Panc1 (cell line): ENCODE measurements at regions of chr11 and their contacts with region 1.

Region 1: GRCh38 chr11:38392176-38392575 is 1794.1 kb upstream of the RAG2 start:
- DNase-seq: no peak
- ATAC-seq: no peak
- H3K4me3 ChIP-seq: no peak overlapping the region
- H3K27ac ChIP-seq: no peak overlapping the region
- H3K4me1 ChIP-seq: no peaks in the 10 kb centered on the region
- H3K27me3 ChIP-seq: no peaks in the 10 kb centered on the region
- CTCF ChIP-seq: no peak

Region 2: DNA sequence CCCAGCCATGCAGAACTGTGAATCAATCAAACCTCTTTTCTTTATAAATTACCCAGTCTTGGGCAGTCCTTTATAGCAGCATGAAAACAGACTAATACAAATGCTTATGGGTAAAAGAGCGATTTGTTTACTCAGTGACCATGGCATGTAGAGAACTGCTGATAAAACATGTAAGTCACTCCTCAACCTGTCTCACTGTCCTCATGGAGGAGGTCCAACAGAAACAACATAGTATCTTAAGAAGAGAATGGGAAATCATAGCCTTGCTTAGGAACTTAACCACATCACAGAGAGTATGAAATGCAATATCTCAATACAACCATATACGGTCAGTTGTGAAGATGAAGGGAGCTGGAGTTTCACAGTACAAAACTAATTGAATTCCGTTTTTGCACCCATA is 60.1 kb before region 1 on chr11:
- CTCF ChIA-PET with region 1: no interaction called
- POLR2A ChIA-PET with region 1: no interaction called
- in situ Hi-C with region 1: no loop called
- intact Hi-C with region 1: no loop called
- DNase-seq: no peak
- ATAC-seq: no peak
- H3K4me3 ChIP-seq: no peak overlapping the region
- H3K27ac ChIP-seq: no peak overlapping the region
- H3K4me1 ChIP-seq: no peaks in the 10 kb centered on the region
- H3K27me3 ChIP-seq: no peaks in the 10 kb centered on the region
- CTCF ChIP-seq: no peak

Region 3: DNA sequence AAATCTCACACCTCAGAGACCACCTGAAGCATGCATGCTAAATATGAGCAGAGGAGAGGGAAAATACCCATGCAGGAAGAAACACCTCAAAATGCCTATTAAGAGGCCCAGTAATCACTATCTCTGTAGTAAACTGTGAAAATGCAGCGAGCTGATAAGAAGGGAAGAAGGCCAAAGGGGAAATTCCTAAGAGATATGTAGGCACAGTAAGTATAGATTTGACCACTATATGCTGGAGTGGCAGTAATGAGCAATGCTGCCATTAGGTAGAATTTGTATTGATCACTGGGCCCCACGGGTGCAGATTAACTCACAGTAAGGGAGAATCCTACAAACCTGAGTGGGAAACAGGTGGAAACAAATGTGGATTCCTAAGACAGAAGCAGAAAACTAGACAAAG is 19.0 kb after region 1 on chr11:
- CTCF ChIA-PET with region 1: no interaction called
- POLR2A ChIA-PET with region 1: no interaction called
- in situ Hi-C with region 1: no loop called
- intact Hi-C with region 1: no loop called
- DNase-seq: no peak
- ATAC-seq: no peak
- H3K4me3 ChIP-seq: no peak overlapping the region
- H3K27ac ChIP-seq: no peak overlapping the region
- H3K4me1 ChIP-seq: no peaks in the 10 kb centered on the region
- H3K27me3 ChIP-seq: no peaks in the 10 kb centered on the region
- CTCF ChIP-seq: peak; percentile 24; the same call in 1 of the 2 replicates

Region 4: GRCh38 chr11:38558193-38558592 is 166.0 kb after region 1 on chr11:
- CTCF ChIA-PET with region 1: no interaction called
- POLR2A ChIA-PET with region 1: no interaction called
- in situ Hi-C with region 1: no loop called
- intact Hi-C with region 1: loop called (anchors 5 kb)
- DNase-seq: no peak
- ATAC-seq: no peak
- H3K4me3 ChIP-seq: no peak overlapping the region
- H3K27ac ChIP-seq: no peak overlapping the region
- H3K4me1 ChIP-seq: no peaks in the 10 kb centered on the region
- H3K27me3 ChIP-seq: no peaks in the 10 kb centered on the region
- CTCF ChIP-seq: no peak